B cell (primary cell): ENCODE measurements at regions of chr16 and their contacts with region 1.

Region 1: GRCh38 chr16:57462209-57462977 is at the start of gene POLR2C:
- DNase-seq: peak; percentile 93
- ATAC-seq: peak; percentile 98
- H3K4me3 ChIP-seq: peak within 1 kb of the TSS; percentile 59 to 88 (median 82)
- H3K4me3 Mint-ChIP-seq: peak within 1 kb of the TSS; percentile 100
- H3K27ac ChIP-seq: peak within 1 kb of the TSS; percentile 42 to 59
- H3K27ac Mint-ChIP-seq: peak within 1 kb of the TSS; percentile 99
- H3K4me1 ChIP-seq: peaks cover 12% of the 10 kb centered on the region in 2 donors
- H3K4me1 Mint-ChIP-seq: peaks cover 29% of the 10 kb centered on the region
- H3K27me3 ChIP-seq: no peaks in the 10 kb centered on the region
- H3K27me3 Mint-ChIP-seq: no peaks in the 10 kb centered on the region
- CTCF ChIP-seq: peak; percentile 95
- total RNA-seq, gene POLR2C: 57.8 and 61.6 TPM in 2 replicates

Region 2: GRCh38 chr16:57244767-57245471 is 217.5 kb before region 1 on chr16 and contains the start of gene ARL2BP:
- CTCF ChIA-PET with region 1: no interaction called
- POLR2A ChIA-PET with region 1: no interaction called
- intact Hi-C with region 1: loop called (anchors 1 kb)
- DNase-seq: peak; percentile 96
- ATAC-seq: peak; percentile 95
- H3K4me3 ChIP-seq: peak within 1 kb of the TSS; percentile 74 to 85 (median 79)
- H3K4me3 Mint-ChIP-seq: peak within 1 kb of the TSS; percentile 99
- H3K27ac ChIP-seq: peak within 1 kb of the TSS; percentile 79 to 92
- H3K27ac Mint-ChIP-seq: peak within 1 kb of the TSS; percentile 96
- H3K4me1 ChIP-seq: peaks cover 26 to 33% of the 10 kb centered on the region in 2 donors
- H3K4me1 Mint-ChIP-seq: peaks cover 34% of the 10 kb centered on the region
- H3K27me3 ChIP-seq: no peaks in the 10 kb centered on the region
- H3K27me3 Mint-ChIP-seq: no peaks in the 10 kb centered on the region
- CTCF ChIP-seq: no peak
- total RNA-seq, gene ARL2BP: 36.8 and 38.8 TPM in 2 replicates

Region 3: DNA sequence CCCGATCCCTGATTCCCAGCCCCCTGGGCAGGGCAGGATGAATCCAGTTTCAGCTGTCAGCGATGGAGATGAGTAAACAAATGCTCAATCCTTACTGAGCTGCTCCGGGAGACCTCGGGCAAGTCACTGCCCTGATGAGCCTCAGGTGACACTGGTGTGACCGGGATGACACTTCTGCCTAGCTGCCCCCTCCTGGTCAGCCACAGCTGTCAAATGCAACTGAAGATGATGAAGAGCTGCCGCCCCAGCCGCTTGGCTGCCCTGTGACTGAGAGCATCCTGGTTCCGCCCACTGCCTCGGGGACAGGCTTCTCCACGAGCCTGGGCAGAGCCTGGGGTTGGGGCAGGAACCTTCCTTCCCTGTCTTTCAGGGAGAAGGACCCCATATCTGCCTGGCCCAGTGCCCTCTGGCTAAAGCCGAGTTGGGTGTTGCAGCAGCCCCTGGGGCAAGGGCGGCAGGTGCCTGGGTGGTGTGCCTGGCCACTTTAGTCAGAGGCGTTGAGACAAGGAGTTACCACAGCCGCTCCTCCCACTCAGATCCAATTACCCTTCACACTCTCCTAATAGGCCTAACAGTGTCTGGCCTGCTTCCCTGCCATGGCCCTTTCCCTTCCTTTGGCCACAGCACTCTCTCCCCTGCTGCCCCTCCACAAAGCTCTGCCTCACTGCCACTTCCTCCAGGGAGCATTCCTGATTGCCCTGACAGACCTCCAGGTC is 52.4 kb before region 1 on chr16:
- CTCF ChIA-PET with region 1: no interaction called
- POLR2A ChIA-PET with region 1: no interaction called
- intact Hi-C with region 1: no loop called
- DNase-seq: no peak
- ATAC-seq: no peak
- H3K4me3 ChIP-seq: no peak overlapping the region
- H3K4me3 Mint-ChIP-seq: no peak overlapping the region
- H3K27ac ChIP-seq: no peak overlapping the region
- H3K27ac Mint-ChIP-seq: peak overlapping the region; percentile 43
- H3K4me1 ChIP-seq: peaks cover 42 to 49% of the 10 kb centered on the region in 2 donors
- H3K4me1 Mint-ChIP-seq: peaks cover 48% of the 10 kb centered on the region
- H3K27me3 ChIP-seq: no peaks in the 10 kb centered on the region
- H3K27me3 Mint-ChIP-seq: no peaks in the 10 kb centered on the region
- CTCF ChIP-seq: no peak

Region 4: GRCh38 chr16:57475711-57476339 is 13.4 kb after region 1 on chr16:
- CTCF ChIA-PET with region 1: interaction called, 6 read pairs
- POLR2A ChIA-PET with region 1: no interaction called
- intact Hi-C with region 1: loop called (anchors 2 kb)
- DNase-seq: peak; percentile 78
- ATAC-seq: peak; percentile 93
- H3K4me3 ChIP-seq: no peak overlapping the region
- H3K4me3 Mint-ChIP-seq: peak overlapping the region; percentile 65
- H3K27ac ChIP-seq: no peak overlapping the region
- H3K27ac Mint-ChIP-seq: peak overlapping the region; percentile 7
- H3K4me1 ChIP-seq: peaks cover 33 to 48% of the 10 kb centered on the region in 2 donors
- H3K4me1 Mint-ChIP-seq: peaks cover 33% of the 10 kb centered on the region
- H3K27me3 ChIP-seq: peaks cover 0 to 13% (median 0%) of the 10 kb centered on the region in 4 experiments
- H3K27me3 Mint-ChIP-seq: peaks cover 9% of the 10 kb centered on the region
- CTCF ChIP-seq: peak; percentile 87

Region 5: GRCh38 chr16:57530104-57530521 is 67.7 kb after region 1 on chr16:
- CTCF ChIA-PET with region 1: interaction called, 5 read pairs
- POLR2A ChIA-PET with region 1: no interaction called
- intact Hi-C with region 1: loop called (anchors 5 kb)
- DNase-seq: peak; percentile 75
- ATAC-seq: peak; percentile 72
- H3K4me3 ChIP-seq: peak overlapping the region in 4 of 5 experiments; percentile 4 to 20 (median 10)
- H3K4me3 Mint-ChIP-seq: peak overlapping the region; percentile 86
- H3K27ac ChIP-seq: peak overlapping the region; percentile 73 to 83
- H3K27ac Mint-ChIP-seq: peak overlapping the region; percentile 97
- H3K4me1 ChIP-seq: peaks cover 61 to 66% of the 10 kb centered on the region in 2 donors
- H3K4me1 Mint-ChIP-seq: peaks cover 68% of the 10 kb centered on the region
- H3K27me3 ChIP-seq: no peaks in the 10 kb centered on the region
- H3K27me3 Mint-ChIP-seq: no peaks in the 10 kb centered on the region
- CTCF ChIP-seq: no peak

Region 6: GRCh38 chr16:57723170-57723569 is 260.8 kb after region 1 on chr16:
- CTCF ChIA-PET with region 1: no interaction called
- POLR2A ChIA-PET with region 1: no interaction called
- intact Hi-C with region 1: no loop called
- DNase-seq: no peak
- ATAC-seq: no peak
- H3K4me3 ChIP-seq: no peak overlapping the region
- H3K4me3 Mint-ChIP-seq: no peak overlapping the region
- H3K27ac ChIP-seq: no peak overlapping the region
- H3K27ac Mint-ChIP-seq: no peak overlapping the region
- H3K4me1 ChIP-seq: peaks cover 0 to 8% of the 10 kb centered on the region in 2 donors
- H3K4me1 Mint-ChIP-seq: peaks cover 5% of the 10 kb centered on the region
- H3K27me3 ChIP-seq: no peaks in the 10 kb centered on the region
- H3K27me3 Mint-ChIP-seq: no peaks in the 10 kb centered on the region
- CTCF ChIP-seq: no peak